B cell (primary cell): ENCODE measurements at regions of chr2 and their contacts with region 1.

Region 1: DNA sequence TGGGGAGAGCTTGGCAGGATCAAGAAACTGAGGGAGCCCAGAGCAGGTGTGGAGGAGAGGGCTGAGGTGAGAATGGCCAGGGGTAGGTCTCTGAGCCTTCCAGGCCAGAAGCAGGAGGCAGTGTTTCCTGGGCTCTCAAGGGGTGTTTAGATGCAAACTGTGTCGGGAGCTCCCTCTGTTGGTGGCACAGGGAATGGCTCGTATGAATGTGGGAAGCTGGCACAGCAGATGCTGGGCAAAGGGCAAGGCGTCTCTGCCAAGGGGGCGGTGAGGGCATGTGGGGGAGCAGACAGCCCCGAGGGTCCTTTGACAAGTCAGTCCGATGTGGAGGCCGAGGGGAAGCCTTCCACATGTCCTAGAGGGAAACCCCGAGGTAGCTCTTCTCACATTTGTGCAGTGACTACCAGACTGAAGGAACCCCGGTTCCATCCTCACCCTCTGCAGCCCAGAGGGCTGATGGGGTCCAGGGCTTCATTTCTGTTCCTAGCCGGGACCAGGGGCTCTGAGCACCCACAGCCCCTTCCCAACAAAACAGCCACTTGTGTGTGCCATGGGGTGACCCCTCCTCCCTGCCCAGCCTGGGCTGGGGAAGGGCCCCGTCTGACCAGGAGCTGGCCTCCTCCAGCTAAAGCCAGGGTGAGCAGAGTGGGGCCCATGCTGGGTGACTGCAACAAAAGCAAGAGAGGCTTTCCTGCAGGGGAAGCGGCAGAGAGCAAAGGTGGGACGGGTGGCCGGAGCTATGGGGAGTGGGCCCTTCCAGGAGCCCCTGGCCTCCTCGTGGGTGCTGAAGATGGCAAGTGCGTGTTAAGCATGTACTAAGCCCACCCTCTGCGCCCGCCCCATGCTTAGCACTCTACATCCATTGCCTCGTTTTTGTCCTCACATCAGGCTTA is 103.4 kb downstream of the SEPTIN10 start:
- DNase-seq: peak; percentile 76
- ATAC-seq: peak; percentile 81
- H3K4me3 ChIP-seq: no peak overlapping the region
- H3K4me3 Mint-ChIP-seq: no peak overlapping the region
- H3K27ac ChIP-seq: no peak overlapping the region
- H3K27ac Mint-ChIP-seq: no peak overlapping the region
- H3K4me1 ChIP-seq: no peaks in the 10 kb centered on the region
- H3K4me1 Mint-ChIP-seq: no peaks in the 10 kb centered on the region
- H3K27me3 ChIP-seq: no peaks in the 10 kb centered on the region
- H3K27me3 Mint-ChIP-seq: peaks cover 9% of the 10 kb centered on the region
- CTCF ChIP-seq: peak; percentile 91

Region 2: DNA sequence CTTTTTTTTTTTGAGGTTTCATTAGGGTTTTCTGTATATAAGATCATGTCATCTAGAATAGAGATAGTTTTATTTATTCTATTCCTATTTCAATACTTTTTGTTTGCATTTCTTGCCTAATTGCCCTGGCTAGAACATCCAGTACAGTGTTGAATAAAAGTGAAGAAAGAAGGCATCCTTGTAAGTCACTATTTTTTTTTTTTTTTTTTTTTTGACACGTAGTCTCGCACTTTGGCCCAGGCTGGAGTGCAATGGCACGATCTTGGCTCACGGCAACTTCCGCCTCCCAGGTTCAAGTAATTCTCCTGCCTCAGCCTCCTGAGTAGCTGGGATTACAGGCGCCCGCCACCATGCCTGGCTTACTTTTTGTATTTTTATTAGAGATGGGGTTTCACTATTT is 818.9 kb before region 1 on chr2:
- CTCF ChIA-PET with region 1: interaction called, 5 read pairs
- POLR2A ChIA-PET with region 1: no interaction called
- intact Hi-C with region 1: loop called (anchors 5 kb)
- DNase-seq: no peak
- ATAC-seq: no peak
- H3K4me3 ChIP-seq: no peak overlapping the region
- H3K4me3 Mint-ChIP-seq: no peak overlapping the region
- H3K27ac ChIP-seq: no peak overlapping the region
- H3K27ac Mint-ChIP-seq: no peak overlapping the region
- H3K4me1 ChIP-seq: no peaks in the 10 kb centered on the region
- H3K4me1 Mint-ChIP-seq: no peaks in the 10 kb centered on the region
- H3K27me3 ChIP-seq: no peaks in the 10 kb centered on the region
- H3K27me3 Mint-ChIP-seq: no peaks in the 10 kb centered on the region
- CTCF ChIP-seq: no peak

Region 3: GRCh38 chr2:109128048-109128465 is 382.3 kb before region 1 on chr2:
- CTCF ChIA-PET with region 1: interaction called, 106 read pairs
- POLR2A ChIA-PET with region 1: no interaction called
- intact Hi-C with region 1: loop called (anchors 1 kb)
- DNase-seq: peak; percentile 67
- ATAC-seq: peak; percentile 63
- H3K4me3 ChIP-seq: peak overlapping the region; percentile 46 to 77 (median 62)
- H3K4me3 Mint-ChIP-seq: peak overlapping the region; percentile 84
- H3K27ac ChIP-seq: no peak overlapping the region
- H3K27ac Mint-ChIP-seq: no peak overlapping the region
- H3K4me1 ChIP-seq: peaks cover 5 to 10% of the 10 kb centered on the region in 2 donors
- H3K4me1 Mint-ChIP-seq: peaks cover 10% of the 10 kb centered on the region
- H3K27me3 ChIP-seq: peaks cover 0 to 10% (median 2%) of the 10 kb centered on the region in 4 experiments
- H3K27me3 Mint-ChIP-seq: peaks cover 33% of the 10 kb centered on the region
- CTCF ChIP-seq: peak; percentile 82

Region 4: GRCh38 chr2:109497911-109498870 is 12.2 kb before region 1 on chr2:
- CTCF ChIA-PET with region 1: interaction called, 10 read pairs
- POLR2A ChIA-PET with region 1: no interaction called
- intact Hi-C with region 1: no loop called
- DNase-seq: no peak
- ATAC-seq: no peak
- H3K4me3 ChIP-seq: no peak overlapping the region
- H3K4me3 Mint-ChIP-seq: no peak overlapping the region
- H3K27ac ChIP-seq: no peak overlapping the region
- H3K27ac Mint-ChIP-seq: no peak overlapping the region
- H3K4me1 ChIP-seq: no peaks in the 10 kb centered on the region
- H3K4me1 Mint-ChIP-seq: no peaks in the 10 kb centered on the region
- H3K27me3 ChIP-seq: no peaks in the 10 kb centered on the region
- H3K27me3 Mint-ChIP-seq: no peaks in the 10 kb centered on the region
- CTCF ChIP-seq: no peak

Region 5: GRCh38 chr2:109702618-109702985 is 192.2 kb after region 1 on chr2:
- CTCF ChIA-PET with region 1: no interaction called
- POLR2A ChIA-PET with region 1: no interaction called
- intact Hi-C with region 1: no loop called
- DNase-seq: no peak
- ATAC-seq: no peak
- H3K4me3 ChIP-seq: no peak overlapping the region
- H3K4me3 Mint-ChIP-seq: no peak overlapping the region
- H3K27ac ChIP-seq: no peak overlapping the region
- H3K27ac Mint-ChIP-seq: no peak overlapping the region
- H3K4me1 ChIP-seq: no peaks in the 10 kb centered on the region
- H3K4me1 Mint-ChIP-seq: no peaks in the 10 kb centered on the region
- H3K27me3 ChIP-seq: peaks cover 0 to 9% (median 0%) of the 10 kb centered on the region in 4 experiments
- H3K27me3 Mint-ChIP-seq: peaks cover 14% of the 10 kb centered on the region
- CTCF ChIP-seq: no peak